ENCODE measurements at regions of chrX and their contacts with region 1.

Region 1: DNA sequence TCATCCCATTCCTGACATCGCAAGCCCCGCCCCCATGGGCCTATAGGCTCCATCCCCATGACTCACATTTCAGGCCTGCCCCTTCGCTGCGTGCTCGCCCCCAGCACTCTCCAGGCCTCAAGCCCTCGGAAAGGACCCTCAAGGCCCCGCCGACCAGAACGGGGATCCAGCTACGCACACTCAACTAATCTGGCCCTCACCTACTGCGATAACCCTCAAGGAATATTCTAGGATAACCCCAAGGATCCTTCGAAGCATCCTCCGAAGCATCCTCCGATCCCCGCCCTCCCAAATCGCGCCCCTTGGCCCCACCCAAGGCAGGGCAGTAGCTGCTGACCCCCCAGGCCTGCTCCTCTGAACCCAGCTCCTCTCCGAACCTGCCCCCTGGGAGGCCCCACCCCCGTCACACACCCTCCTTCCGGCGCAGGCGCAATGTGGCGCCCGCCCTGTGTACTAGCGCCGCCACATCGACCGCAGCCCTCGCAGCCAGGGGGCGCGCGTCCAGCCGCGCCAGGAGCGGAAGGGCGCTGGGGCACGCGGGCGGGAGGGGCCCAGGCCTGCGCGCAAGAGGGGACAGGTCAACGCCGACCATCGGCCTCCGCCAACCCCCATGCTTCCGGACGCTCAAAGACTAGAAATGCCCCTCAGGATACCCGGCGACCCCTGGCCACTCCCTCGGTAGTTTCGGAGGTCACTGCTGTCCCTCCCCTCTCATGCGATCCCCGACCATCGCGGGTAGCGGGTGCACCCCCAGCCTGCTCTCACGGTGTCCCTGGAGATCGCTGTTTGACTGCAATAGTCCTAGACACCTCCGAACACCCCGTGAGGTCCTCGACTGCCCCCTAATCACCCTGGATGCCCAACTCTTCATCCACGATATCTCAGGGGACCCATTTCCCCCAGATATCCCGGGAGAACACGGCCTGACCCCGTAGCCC is 6.4 kb upstream of the MAGIX start:
- DNase-seq: no peak
- ATAC-seq: peak; percentile 95
- H3K4me3 ChIP-seq: peak overlapping the region; percentile 62
- H3K27ac ChIP-seq: peak overlapping the region; percentile 43
- H3K4me1 ChIP-seq: no peaks in the 10 kb centered on the region
- H3K27me3 ChIP-seq: no peaks in the 10 kb centered on the region
- CTCF ChIP-seq: peak; percentile 57 to 79 (median 58); a peak in 5 of 6 replicates
- EP300 ChIP-seq: no peak
- POLR2A ChIP-seq: peak; percentile 75
- RAD21 ChIP-seq: peak; percentile 37; the same call in 1 of the 2 replicates

Region 2: GRCh38 chrX:48911412-48912182 is 244.6 kb before region 1 on chrX and contains the start of gene SLC35A2:
- CTCF ChIA-PET with region 1: no interaction called
- POLR2A ChIA-PET with region 1: no interaction called
- RAD21 ChIA-PET with region 1: no interaction called
- SMC1A ChIA-PET with region 1: no interaction called
- in situ Hi-C with region 1: no loop called
- intact Hi-C with region 1: no loop called
- DNase-seq: no peak
- ATAC-seq: peak; percentile 86
- H3K4me3 ChIP-seq: peak within 1 kb of the TSS; percentile 62
- H3K27ac ChIP-seq: peak within 1 kb of the TSS; percentile 68
- H3K4me1 ChIP-seq: no peaks in the 10 kb centered on the region
- H3K27me3 ChIP-seq: no peaks in the 10 kb centered on the region
- CTCF ChIP-seq: no peak
- EP300 ChIP-seq: no peak
- POLR2A ChIP-seq: peak; percentile 89; the same call in 1 of the 2 replicates
- RAD21 ChIP-seq: no peak
- polyA plus RNA-seq, gene SLC35A2: 2.1 to 6.8 TPM

Region 3: GRCh38 chrX:48958635-48959094 is 197.5 kb before region 1 on chrX:
- CTCF ChIA-PET with region 1: no interaction called
- POLR2A ChIA-PET with region 1: no interaction called
- RAD21 ChIA-PET with region 1: no interaction called
- SMC1A ChIA-PET with region 1: no interaction called
- in situ Hi-C with region 1: no loop called
- intact Hi-C with region 1: no loop called
- DNase-seq: no peak
- ATAC-seq: no peak
- H3K4me3 ChIP-seq: peak overlapping the region; percentile 75
- H3K27ac ChIP-seq: peak overlapping the region; percentile 70
- H3K4me1 ChIP-seq: peaks cover 11% of the 10 kb centered on the region
- H3K27me3 ChIP-seq: no peaks in the 10 kb centered on the region
- CTCF ChIP-seq: no peak
- EP300 ChIP-seq: no peak
- POLR2A ChIP-seq: no peak
- RAD21 ChIP-seq: no peak

Region 4: GRCh38 chrX:49120099-49120498 is 36.1 kb before region 1 on chrX:
- CTCF ChIA-PET with region 1: interaction called, 10 read pairs
- POLR2A ChIA-PET with region 1: interaction called, 3 read pairs
- RAD21 ChIA-PET with region 1: interaction called, 3 read pairs
- SMC1A ChIA-PET with region 1: interaction called, 3 read pairs
- in situ Hi-C with region 1: no loop called
- intact Hi-C with region 1: loop called (anchors 1 kb)
- DNase-seq: no peak
- ATAC-seq: no peak
- H3K4me3 ChIP-seq: no peak overlapping the region
- H3K27ac ChIP-seq: no peak overlapping the region
- H3K4me1 ChIP-seq: no peaks in the 10 kb centered on the region
- H3K27me3 ChIP-seq: no peaks in the 10 kb centered on the region
- CTCF ChIP-seq: peak in 2 of 3 experiments; percentile 8 to 31; a peak in 2 of 6 replicates
- EP300 ChIP-seq: no peak
- POLR2A ChIP-seq: no peak
- RAD21 ChIP-seq: 0 out of 2 replicates have a peak, but pooled peaks have one; percentile 5

Region 5: GRCh38 chrX:49137492-49137891 is 18.7 kb before region 1 on chrX:
- CTCF ChIA-PET with region 1: interaction called, 27 read pairs
- POLR2A ChIA-PET with region 1: interaction called, 6 read pairs
- RAD21 ChIA-PET with region 1: interaction called, 6 read pairs
- SMC1A ChIA-PET with region 1: interaction called, 7 read pairs
- in situ Hi-C with region 1: no loop called
- intact Hi-C with region 1: no loop called
- DNase-seq: no peak
- ATAC-seq: no peak
- H3K4me3 ChIP-seq: no peak overlapping the region
- H3K27ac ChIP-seq: no peak overlapping the region
- H3K4me1 ChIP-seq: no peaks in the 10 kb centered on the region
- H3K27me3 ChIP-seq: no peaks in the 10 kb centered on the region
- CTCF ChIP-seq: no peak
- EP300 ChIP-seq: no peak
- POLR2A ChIP-seq: no peak
- RAD21 ChIP-seq: no peak

Region 6: GRCh38 chrX:49198540-49199314 is 42.6 kb after region 1 on chrX:
- CTCF ChIA-PET with region 1: no interaction called
- POLR2A ChIA-PET with region 1: no interaction called
- RAD21 ChIA-PET with region 1: no interaction called
- SMC1A ChIA-PET with region 1: no interaction called
- in situ Hi-C with region 1: no loop called
- intact Hi-C with region 1: no loop called
- DNase-seq: no peak
- ATAC-seq: no peak
- H3K4me3 ChIP-seq: no peak overlapping the region
- H3K27ac ChIP-seq: no peak overlapping the region
- H3K4me1 ChIP-seq: no peaks in the 10 kb centered on the region
- H3K27me3 ChIP-seq: no peaks in the 10 kb centered on the region
- CTCF ChIP-seq: no peak
- EP300 ChIP-seq: no peak
- POLR2A ChIP-seq: no peak
- RAD21 ChIP-seq: no peak

Region 7: DNA sequence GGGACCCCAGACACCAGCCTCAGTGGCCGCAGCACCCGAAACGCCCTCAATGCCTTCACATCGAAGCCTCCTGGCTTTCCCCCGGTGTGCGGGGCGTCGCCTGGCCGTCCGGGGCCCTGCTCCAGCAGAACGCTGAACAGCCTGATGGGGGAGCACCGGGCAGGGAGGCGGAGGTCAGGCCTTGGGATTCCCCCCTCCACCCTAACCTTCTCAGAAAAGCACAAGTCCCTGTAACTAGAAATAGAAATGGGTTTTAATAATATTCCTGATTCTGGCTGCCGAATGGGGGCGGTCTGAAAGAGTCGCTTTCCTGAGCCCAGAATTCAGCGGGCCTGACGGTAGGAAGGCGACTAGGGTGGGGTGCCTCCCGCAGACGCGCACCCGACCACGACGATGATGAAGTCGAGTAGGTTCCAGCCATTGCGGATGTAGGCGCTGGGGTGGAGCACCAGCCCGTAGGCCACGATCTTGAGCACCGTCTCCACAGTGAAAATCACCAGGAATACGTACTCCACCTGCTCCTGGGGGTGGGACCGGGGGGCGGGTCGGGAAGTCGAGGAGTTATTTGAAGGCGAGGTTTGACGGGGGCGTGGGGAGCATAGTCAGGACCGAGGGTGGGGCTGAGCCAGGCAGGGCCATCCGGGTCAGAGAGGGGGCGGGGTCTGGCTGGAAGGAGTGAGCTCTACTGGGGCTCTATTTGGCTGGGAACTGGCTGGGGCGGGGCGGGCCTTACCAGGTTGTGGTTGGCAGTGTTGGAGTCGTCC is 74.5 kb after region 1 on chrX:
- CTCF ChIA-PET with region 1: no interaction called
- POLR2A ChIA-PET with region 1: no interaction called
- RAD21 ChIA-PET with region 1: no interaction called
- SMC1A ChIA-PET with region 1: no interaction called
- in situ Hi-C with region 1: no loop called
- intact Hi-C with region 1: no loop called
- DNase-seq: no peak
- ATAC-seq: peak; percentile 85
- H3K4me3 ChIP-seq: peak overlapping the region; percentile 47
- H3K27ac ChIP-seq: peak overlapping the region; percentile 30
- H3K4me1 ChIP-seq: no peaks in the 10 kb centered on the region
- H3K27me3 ChIP-seq: no peaks in the 10 kb centered on the region
- CTCF ChIP-seq: peak; percentile 29 to 33 (median 31); a peak in 5 of 6 replicates
- EP300 ChIP-seq: no peak
- POLR2A ChIP-seq: peak; percentile 61
- RAD21 ChIP-seq: no peak; the same call in 1 of the 2 replicates